ENCODE measurements at regions of chr22 and their contacts with region 1.

Region 1: DNA sequence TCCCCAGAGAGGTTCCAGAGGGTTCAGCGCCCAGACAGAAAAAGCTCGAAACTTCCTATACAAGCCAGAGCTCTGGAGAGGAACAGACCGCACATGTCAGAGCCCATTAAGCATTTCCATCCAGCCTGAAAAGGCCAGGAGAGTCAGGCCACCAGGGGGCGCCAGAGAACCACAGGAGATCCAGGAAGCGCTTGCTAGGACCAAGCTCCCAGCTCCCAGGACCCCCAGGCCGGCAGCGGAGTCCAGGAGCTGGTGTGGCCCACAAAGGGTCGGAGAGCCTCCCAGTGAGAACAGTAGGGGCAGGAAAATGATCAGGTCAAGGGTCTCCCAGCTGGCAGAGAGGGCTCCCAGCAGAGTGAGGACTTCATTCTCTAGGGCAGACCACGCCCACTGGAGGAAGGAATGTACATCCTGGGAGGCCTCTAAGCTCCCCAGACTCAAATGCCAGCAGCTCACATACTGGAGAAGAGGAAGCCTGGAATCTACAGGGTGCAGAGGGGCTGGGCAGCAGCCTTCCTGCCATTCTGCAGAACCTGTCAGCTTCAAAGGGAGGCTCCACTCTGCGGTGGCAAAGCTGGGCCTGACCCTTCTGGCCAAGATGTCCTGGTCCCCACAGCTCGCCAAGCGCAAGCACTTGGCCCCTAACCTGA is 2.1 kb upstream of the MEI1 start:
- DNase-seq: peak; percentile 81
- H3K4me3 Mint-ChIP-seq: peak overlapping the region; percentile 40
- H3K27ac Mint-ChIP-seq: peak overlapping the region; percentile 84
- H3K4me1 Mint-ChIP-seq: peaks cover 13% of the 10 kb centered on the region
- H3K27me3 Mint-ChIP-seq: no peaks in the 10 kb centered on the region

Region 2: GRCh38 chr22:41780746-41781505 is 83.7 kb after region 1 on chr22:
- intact Hi-C with region 1: loop called (anchors 1 kb)
- DNase-seq: peak; percentile 90
- H3K4me3 Mint-ChIP-seq: peak overlapping the region; percentile 83
- H3K27ac Mint-ChIP-seq: peak overlapping the region; percentile 91
- H3K4me1 Mint-ChIP-seq: peaks cover 41% of the 10 kb centered on the region
- H3K27me3 Mint-ChIP-seq: peaks cover 2% of the 10 kb centered on the region

Region 3: GRCh38 chr22:41873391-41873790 is 176.1 kb after region 1 on chr22:
- intact Hi-C with region 1: loop called (anchors 2 kb)
- DNase-seq: peak; percentile 10
- H3K4me3 Mint-ChIP-seq: peak overlapping the region; percentile 76
- H3K27ac Mint-ChIP-seq: peak overlapping the region; percentile 82
- H3K4me1 Mint-ChIP-seq: peaks cover 67% of the 10 kb centered on the region
- H3K27me3 Mint-ChIP-seq: no peaks in the 10 kb centered on the region

Region 4: DNA sequence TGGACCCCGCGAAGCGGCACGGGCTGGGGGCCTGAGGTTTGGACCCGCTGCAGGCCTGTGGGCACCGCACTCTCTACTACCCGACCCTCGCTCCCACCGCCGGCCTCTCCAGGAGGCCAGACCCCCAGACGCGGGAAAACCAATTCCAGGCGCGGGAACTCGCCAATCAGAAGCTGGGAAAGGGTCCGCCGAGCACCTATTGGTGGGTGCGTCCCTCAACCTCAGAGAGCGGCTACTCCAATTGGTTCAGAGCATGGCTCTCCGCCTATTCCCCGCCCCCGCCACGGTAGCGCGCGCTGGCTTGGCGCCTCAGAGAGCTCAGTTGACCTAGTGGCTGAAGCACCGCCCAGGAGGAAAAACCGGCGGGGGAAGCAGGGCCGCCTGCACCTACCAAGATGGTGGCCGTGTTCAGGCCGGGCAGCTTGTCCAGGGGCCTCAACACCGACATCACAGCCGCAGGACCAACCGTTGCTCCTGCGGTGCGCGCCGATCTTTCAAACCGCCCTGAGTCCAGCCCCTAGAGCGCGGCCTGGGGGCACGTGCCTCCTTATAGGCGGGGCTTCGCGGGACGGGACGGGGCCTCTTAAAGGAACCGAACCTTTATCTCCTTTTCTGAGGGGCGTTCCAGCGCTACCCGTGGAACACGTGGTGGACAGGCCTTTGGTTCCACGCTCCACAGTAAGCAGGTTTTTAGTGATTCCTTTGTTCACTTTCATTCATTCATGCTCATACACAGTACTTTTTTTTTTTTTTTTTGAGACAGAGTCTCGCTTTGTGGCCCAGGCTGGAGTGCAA is 249.6 kb after region 1 on chr22 and contains the start of gene CENPM:
- intact Hi-C with region 1: loop called (anchors 1 kb)
- DNase-seq: peak; percentile 93
- H3K4me3 Mint-ChIP-seq: peak within 1 kb of the TSS; percentile 92
- H3K27ac Mint-ChIP-seq: peak within 1 kb of the TSS; percentile 93
- H3K4me1 Mint-ChIP-seq: peaks cover 47% of the 10 kb centered on the region
- H3K27me3 Mint-ChIP-seq: no peaks in the 10 kb centered on the region
- total RNA-seq, gene CENPM: 82.0 and 84.6 TPM in 2 replicates

Region 5: GRCh38 chr22:42437488-42438292 is 740.4 kb after region 1 on chr22:
- intact Hi-C with region 1: loop called (anchors 10 kb)
- DNase-seq: peak; percentile 76
- H3K4me3 Mint-ChIP-seq: peak overlapping the region; percentile 83
- H3K27ac Mint-ChIP-seq: peak overlapping the region; percentile 73
- H3K4me1 Mint-ChIP-seq: peaks cover 21% of the 10 kb centered on the region
- H3K27me3 Mint-ChIP-seq: peaks cover 8% of the 10 kb centered on the region